ENCODE measurements at regions of chr12 and their contacts with region 1.

Region 1: GRCh38 chr12:64780531-64781279 is 21.5 kb upstream of the GNS start:
- DNase-seq: peak; percentile 43
- H3K4me3 ChIP-seq: peak overlapping the region; percentile 23 to 64 (median 49)
- H3K27ac ChIP-seq: no peak overlapping the region
- H3K4me1 ChIP-seq: peaks cover 16% of the 10 kb centered on the region
- H3K27me3 ChIP-seq: peaks cover 4 to 19% of the 10 kb centered on the region in 2 experiments
- CTCF ChIP-seq: no peak
- POLR2A ChIP-seq: no peak

Region 2: GRCh38 chr12:64759035-64759901 is 21.4 kb before region 1 on chr12 and contains the start of gene GNS:
- CTCF ChIA-PET with region 1: interaction called, 3 read pairs
- POLR2A ChIA-PET with region 1: no interaction called
- dilution Hi-C with region 1: no loop called
- intact Hi-C with region 1: loop called (anchors 1 kb)
- DNase-seq: peak; percentile 98
- H3K4me3 ChIP-seq: peak within 1 kb of the TSS; percentile 76 to 79 (median 77)
- H3K27ac ChIP-seq: peak within 1 kb of the TSS; percentile 39
- H3K4me1 ChIP-seq: peaks cover 17% of the 10 kb centered on the region
- H3K27me3 ChIP-seq: no peaks in the 10 kb centered on the region
- CTCF ChIP-seq: no peak
- POLR2A ChIP-seq: peak; percentile 51
- total RNA-seq, gene GNS: 129 and 142 TPM in 2 replicates

Measured in endothelial cell of umbilical vein (primary cell).